Activated CD8-positive, alpha-beta T cell treated with anti-CD3 and anti-CD28 coated beads for 36 hours (primary cell): ENCODE measurements at regions of chr19 and their contacts with region 1.

Region 1: GRCh38 chr19:56252699-56253422 is 19.7 kb upstream of the EDDM13 start:
- DNase-seq: peak; percentile 90
- ATAC-seq: peak; percentile 97
- H3K4me3 Mint-ChIP-seq: no peak overlapping the region
- H3K27ac Mint-ChIP-seq: no peak overlapping the region
- H3K4me1 Mint-ChIP-seq: no peaks in the 10 kb centered on the region
- H3K27me3 Mint-ChIP-seq: no peaks in the 10 kb centered on the region
- CTCF ChIP-seq: peak; percentile 80

Region 2: GRCh38 chr19:56080669-56081401 is 172.0 kb before region 1 on chr19:
- CTCF ChIA-PET with region 1: interaction called, 16 read pairs
- POLR2A ChIA-PET with region 1: no interaction called
- intact Hi-C with region 1: no loop called
- DNase-seq: peak; percentile 90
- ATAC-seq: peak; percentile 86
- H3K4me3 Mint-ChIP-seq: peak overlapping the region; percentile 48
- H3K27ac Mint-ChIP-seq: no peak overlapping the region
- H3K4me1 Mint-ChIP-seq: peaks cover 10% of the 10 kb centered on the region
- H3K27me3 Mint-ChIP-seq: peaks cover 13% of the 10 kb centered on the region
- CTCF ChIP-seq: peak; percentile 23

Region 3: DNA sequence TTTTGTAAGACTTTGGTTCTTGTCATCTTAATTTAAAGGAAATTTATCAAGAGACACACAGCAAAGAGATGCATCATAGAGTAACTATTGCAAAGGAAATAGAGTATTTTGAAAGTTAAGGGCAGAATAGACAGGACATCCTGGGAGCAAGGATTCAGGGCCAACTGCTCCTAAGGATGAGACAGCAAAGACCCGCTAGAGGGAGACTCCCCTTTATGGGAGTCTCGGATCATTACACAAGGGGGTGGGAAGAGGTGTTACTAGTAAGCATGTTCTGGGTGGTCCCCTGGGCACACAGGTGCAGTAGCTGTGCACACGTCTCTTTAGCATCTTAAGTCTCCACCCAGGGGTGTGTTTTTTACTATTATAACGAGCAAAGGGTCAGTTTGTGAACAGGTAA is 41.1 kb before region 1 on chr19:
- CTCF ChIA-PET with region 1: no interaction called
- POLR2A ChIA-PET with region 1: no interaction called
- intact Hi-C with region 1: no loop called
- DNase-seq: no peak
- ATAC-seq: no peak
- H3K4me3 Mint-ChIP-seq: no peak overlapping the region
- H3K27ac Mint-ChIP-seq: no peak overlapping the region
- H3K4me1 Mint-ChIP-seq: no peaks in the 10 kb centered on the region
- H3K27me3 Mint-ChIP-seq: peaks cover 12% of the 10 kb centered on the region
- CTCF ChIP-seq: no peak

Region 4: DNA sequence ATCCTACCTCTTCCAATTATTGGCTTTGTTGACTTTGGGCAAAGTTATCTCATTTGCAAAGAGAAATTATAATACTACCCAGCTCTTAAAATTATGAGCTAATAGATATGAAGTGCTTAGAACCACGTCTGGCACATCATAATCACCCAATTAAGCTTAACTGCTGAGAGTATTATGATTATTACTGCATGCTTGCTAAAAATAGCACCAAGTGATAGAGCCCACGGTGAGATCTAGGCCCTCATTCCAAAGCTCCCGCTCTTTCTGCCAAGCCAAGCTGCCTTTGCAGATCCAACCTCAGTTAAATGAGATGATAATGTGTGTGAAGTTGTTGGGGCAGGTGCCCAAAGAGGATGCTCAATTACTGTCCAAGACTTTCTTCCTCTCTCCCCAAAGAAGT is 13.2 kb after region 1 on chr19:
- CTCF ChIA-PET with region 1: interaction called, 18 read pairs
- POLR2A ChIA-PET with region 1: no interaction called
- intact Hi-C with region 1: no loop called
- DNase-seq: no peak
- ATAC-seq: no peak
- H3K4me3 Mint-ChIP-seq: no peak overlapping the region
- H3K27ac Mint-ChIP-seq: no peak overlapping the region
- H3K4me1 Mint-ChIP-seq: no peaks in the 10 kb centered on the region
- H3K27me3 Mint-ChIP-seq: no peaks in the 10 kb centered on the region
- CTCF ChIP-seq: no peak

Region 5: DNA sequence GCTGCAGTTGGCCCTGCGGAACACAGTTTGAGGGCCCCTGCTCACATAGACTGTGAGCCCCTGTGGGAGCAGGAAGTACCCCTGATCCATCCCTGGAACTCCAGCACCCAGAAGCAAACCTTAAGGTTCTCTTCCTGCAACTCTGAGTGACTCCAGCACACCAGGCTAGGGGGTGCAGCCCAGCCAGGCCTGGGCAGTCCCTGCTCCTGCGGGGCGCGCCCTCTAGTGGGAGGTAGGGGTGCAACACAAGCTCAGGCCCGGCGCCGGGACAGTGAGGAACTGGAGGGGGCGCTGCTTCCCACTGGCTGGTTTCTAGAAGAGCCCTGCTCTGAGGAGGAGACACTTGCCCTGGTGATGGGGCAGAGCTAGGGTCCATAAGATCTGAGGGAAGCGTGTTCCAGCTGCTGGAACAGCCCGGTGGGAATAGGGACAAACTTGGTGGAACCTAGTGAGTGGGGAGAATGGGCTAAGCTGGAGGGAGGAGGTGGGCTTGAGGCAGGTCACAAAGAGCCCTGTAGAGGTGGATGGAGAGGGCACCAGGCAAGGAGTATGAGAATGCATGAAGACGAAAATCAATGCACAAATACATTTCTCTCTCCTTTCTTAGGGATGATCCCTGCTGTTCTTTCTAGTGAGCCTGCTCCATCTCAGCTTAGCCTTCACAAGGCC is 56.8 kb after region 1 on chr19:
- CTCF ChIA-PET with region 1: interaction called, 18 read pairs
- POLR2A ChIA-PET with region 1: no interaction called
- intact Hi-C with region 1: no loop called
- DNase-seq: peak; percentile 78
- ATAC-seq: peak; percentile 71
- H3K4me3 Mint-ChIP-seq: no peak overlapping the region
- H3K27ac Mint-ChIP-seq: no peak overlapping the region
- H3K4me1 Mint-ChIP-seq: peaks cover 20% of the 10 kb centered on the region
- H3K27me3 Mint-ChIP-seq: no peaks in the 10 kb centered on the region
- CTCF ChIP-seq: peak; percentile 90

Region 6: GRCh38 chr19:56350416-56351045 is 97.7 kb after region 1 on chr19:
- CTCF ChIA-PET with region 1: interaction called, 42 read pairs
- POLR2A ChIA-PET with region 1: no interaction called
- intact Hi-C with region 1: loop called (anchors 10 kb)
- DNase-seq: peak; percentile 74
- ATAC-seq: peak; percentile 67
- H3K4me3 Mint-ChIP-seq: no peak overlapping the region
- H3K27ac Mint-ChIP-seq: no peak overlapping the region
- H3K4me1 Mint-ChIP-seq: no peaks in the 10 kb centered on the region
- H3K27me3 Mint-ChIP-seq: no peaks in the 10 kb centered on the region
- CTCF ChIP-seq: peak; percentile 92

Region 7: GRCh38 chr19:56383826-56384605 is 131.2 kb after region 1 on chr19:
- CTCF ChIA-PET with region 1: no interaction called
- POLR2A ChIA-PET with region 1: no interaction called
- intact Hi-C with region 1: no loop called
- DNase-seq: no peak
- ATAC-seq: no peak
- H3K4me3 Mint-ChIP-seq: no peak overlapping the region
- H3K27ac Mint-ChIP-seq: no peak overlapping the region
- H3K4me1 Mint-ChIP-seq: peaks cover 5% of the 10 kb centered on the region
- H3K27me3 Mint-ChIP-seq: no peaks in the 10 kb centered on the region
- CTCF ChIP-seq: no peak